ENCODE measurements at regions of chr7 and their contacts with region 1.

Region 1: GRCh38 chr7:144786522-144786921 is 49.3 kb downstream of the TPK1 start:
- DNase-seq: peak; percentile 32
- ATAC-seq: no peak
- H3K4me3 ChIP-seq: no peak overlapping the region
- H3K4me3 Mint-ChIP-seq: no peak overlapping the region
- H3K27ac ChIP-seq: no peak overlapping the region
- H3K27ac Mint-ChIP-seq: no peak overlapping the region
- H3K4me1 ChIP-seq: peaks cover 0 to 2% of the 10 kb centered on the region in 2 donors
- H3K4me1 Mint-ChIP-seq: peaks cover 6% of the 10 kb centered on the region
- H3K27me3 ChIP-seq: no peaks in the 10 kb centered on the region
- H3K27me3 Mint-ChIP-seq: no peaks in the 10 kb centered on the region
- CTCF ChIP-seq: peak; percentile 43

Region 2: GRCh38 chr7:144761493-144761892 is 25.0 kb before region 1 on chr7:
- CTCF ChIA-PET with region 1: no interaction called
- POLR2A ChIA-PET with region 1: no interaction called
- intact Hi-C with region 1: no loop called
- DNase-seq: no peak
- ATAC-seq: no peak
- H3K4me3 ChIP-seq: no peak overlapping the region
- H3K4me3 Mint-ChIP-seq: no peak overlapping the region
- H3K27ac ChIP-seq: no peak overlapping the region
- H3K27ac Mint-ChIP-seq: no peak overlapping the region
- H3K4me1 ChIP-seq: no peaks in the 10 kb centered on the region
- H3K4me1 Mint-ChIP-seq: no peaks in the 10 kb centered on the region
- H3K27me3 ChIP-seq: no peaks in the 10 kb centered on the region
- H3K27me3 Mint-ChIP-seq: no peaks in the 10 kb centered on the region
- CTCF ChIP-seq: no peak

Region 3: GRCh38 chr7:144772356-144772755 is 14.2 kb before region 1 on chr7:
- CTCF ChIA-PET with region 1: no interaction called
- POLR2A ChIA-PET with region 1: no interaction called
- intact Hi-C with region 1: no loop called
- DNase-seq: no peak
- ATAC-seq: no peak
- H3K4me3 ChIP-seq: no peak overlapping the region
- H3K4me3 Mint-ChIP-seq: no peak overlapping the region
- H3K27ac ChIP-seq: no peak overlapping the region
- H3K27ac Mint-ChIP-seq: no peak overlapping the region
- H3K4me1 ChIP-seq: peaks cover 7 to 8% of the 10 kb centered on the region in 2 donors
- H3K4me1 Mint-ChIP-seq: peaks cover 27% of the 10 kb centered on the region
- H3K27me3 ChIP-seq: no peaks in the 10 kb centered on the region
- H3K27me3 Mint-ChIP-seq: no peaks in the 10 kb centered on the region
- CTCF ChIP-seq: no peak

Region 4: GRCh38 chr7:144854839-144855424 is 68.4 kb after region 1 on chr7:
- CTCF ChIA-PET with region 1: no interaction called
- POLR2A ChIA-PET with region 1: no interaction called
- intact Hi-C with region 1: loop called (anchors 5 kb)
- DNase-seq: peak; percentile 23
- ATAC-seq: no peak
- H3K4me3 ChIP-seq: no peak overlapping the region
- H3K4me3 Mint-ChIP-seq: no peak overlapping the region
- H3K27ac ChIP-seq: no peak overlapping the region
- H3K27ac Mint-ChIP-seq: no peak overlapping the region
- H3K4me1 ChIP-seq: no peaks in the 10 kb centered on the region
- H3K4me1 Mint-ChIP-seq: no peaks in the 10 kb centered on the region
- H3K27me3 ChIP-seq: no peaks in the 10 kb centered on the region
- H3K27me3 Mint-ChIP-seq: peaks cover 26% of the 10 kb centered on the region
- CTCF ChIP-seq: peak; percentile 66

Measured in B cell (primary cell).